Uterus (tissue), 4 donors: ENCODE measurements at regions of chr1 and their contacts with region 1.

Region 1: GRCh38 chr1:67760030-67760821 is 73.0 kb downstream of the GNG12 start:
- DNase-seq: peak; percentile 51 to 64
- H3K4me3 ChIP-seq: no peak overlapping the region
- H3K27ac ChIP-seq: peak overlapping the region; percentile 11 to 47
- H3K4me1 ChIP-seq: peaks cover 0 to 7% of the 10 kb centered on the region in 2 donors
- H3K27me3 ChIP-seq: no peaks in the 10 kb centered on the region
- CTCF ChIP-seq: peak; percentile 64 to 93 (median 86)
- POLR2A ChIP-seq: no peak

Region 2: DNA sequence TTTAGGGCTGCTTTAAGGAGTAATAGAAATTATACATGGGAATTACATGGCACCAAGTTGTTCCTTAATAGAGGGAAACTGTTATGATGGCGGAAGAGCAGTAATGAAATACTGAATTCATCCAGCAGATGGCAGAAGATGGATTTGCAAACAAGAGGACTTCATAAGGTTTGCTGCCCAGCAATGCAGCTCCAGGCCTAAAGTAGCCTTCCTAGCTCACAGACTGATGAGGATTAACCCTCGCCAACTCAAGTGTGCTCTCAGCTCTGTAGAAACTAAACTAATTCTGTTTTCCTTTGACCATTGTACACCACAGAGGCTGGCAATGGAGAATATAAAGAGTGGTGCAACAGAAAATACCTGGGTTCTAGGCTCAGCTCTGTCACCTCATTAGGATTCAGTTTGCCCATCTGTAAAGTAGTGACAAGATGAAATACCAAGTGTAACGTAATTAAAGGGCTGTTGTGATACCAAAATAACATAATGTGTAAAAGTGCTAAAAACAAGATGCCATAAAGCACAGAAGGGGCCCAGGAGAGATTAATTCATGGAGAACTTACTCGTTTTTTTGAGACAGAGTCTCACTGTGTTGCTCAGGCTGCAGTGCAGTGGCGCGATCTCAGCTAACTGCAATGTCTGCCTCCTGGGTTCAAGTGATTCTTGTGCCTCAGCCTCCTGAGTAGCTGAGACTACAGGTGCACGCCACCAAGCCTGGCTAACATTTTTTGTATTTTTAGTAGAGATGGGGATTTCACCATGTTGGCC is 227.6 kb before region 1 on chr1:
- intact Hi-C with region 1: loop called (anchors 5 kb)
- DNase-seq: peak; percentile 24 to 63
- H3K4me3 ChIP-seq: no peak overlapping the region
- H3K27ac ChIP-seq: no peak overlapping the region
- H3K4me1 ChIP-seq: no peaks in the 10 kb centered on the region
- H3K27me3 ChIP-seq: no peaks in the 10 kb centered on the region
- CTCF ChIP-seq: peak; percentile 70 to 90 (median 80)
- POLR2A ChIP-seq: no peak

Region 3: GRCh38 chr1:67685067-67685557 is 75.1 kb before region 1 on chr1 and contains the start of gene GADD45A:
- intact Hi-C with region 1: loop called (anchors 5 kb)
- DNase-seq: peak; percentile 98 to 99
- H3K4me3 ChIP-seq: peak within 1 kb of the TSS; percentile 60 to 70
- H3K27ac ChIP-seq: peak within 1 kb of the TSS; percentile 83 to 92
- H3K4me1 ChIP-seq: peaks cover 0 to 6% of the 10 kb centered on the region in 2 donors
- H3K27me3 ChIP-seq: no peaks in the 10 kb centered on the region
- CTCF ChIP-seq: peak in 1 of 4 experiments; percentile 45
- POLR2A ChIP-seq: peak; percentile 100
- total RNA-seq, gene GADD45A: 11.1 to 35.6 (median 20.3) TPM

Region 4: GRCh38 chr1:67853704-67854103 is 93.5 kb after region 1 on chr1:
- intact Hi-C with region 1: loop called (anchors 10 kb)
- DNase-seq: peak in 1 of 2 donors; percentile 56
- H3K4me3 ChIP-seq: no peak overlapping the region
- H3K27ac ChIP-seq: no peak overlapping the region
- H3K4me1 ChIP-seq: no peaks in the 10 kb centered on the region
- H3K27me3 ChIP-seq: no peaks in the 10 kb centered on the region
- CTCF ChIP-seq: peak; percentile 32 to 47 (median 46)
- POLR2A ChIP-seq: no peak